ENCODE measurements at regions of chr5 and their contacts with region 1.

Region 1: GRCh38 chr5:32852535-32852934 is 141.4 kb downstream of the NPR3 start:
- DNase-seq: peak in 1 of 2 experiments; percentile 91
- H3K4me3 ChIP-seq: no peak overlapping the region
- H3K27ac ChIP-seq: no peak overlapping the region
- H3K4me1 ChIP-seq: peaks cover 6% of the 10 kb centered on the region; the same call in 1 of the 2 replicates
- H3K27me3 ChIP-seq: peaks cover 10% of the 10 kb centered on the region; the same call in 1 of the 2 replicates
- CTCF ChIP-seq: peak; percentile 66

Region 2: GRCh38 chr5:32388432-32389129 is 464.0 kb before region 1 on chr5:
- CTCF ChIA-PET with region 1: no interaction called
- POLR2A ChIA-PET with region 1: no interaction called
- intact Hi-C with region 1: no loop called
- DNase-seq: no peak
- H3K4me3 ChIP-seq: no peak overlapping the region
- H3K27ac ChIP-seq: no peak overlapping the region
- H3K4me1 ChIP-seq: no peaks in the 10 kb centered on the region
- H3K27me3 ChIP-seq: no peaks in the 10 kb centered on the region
- CTCF ChIP-seq: no peak

Region 3: DNA sequence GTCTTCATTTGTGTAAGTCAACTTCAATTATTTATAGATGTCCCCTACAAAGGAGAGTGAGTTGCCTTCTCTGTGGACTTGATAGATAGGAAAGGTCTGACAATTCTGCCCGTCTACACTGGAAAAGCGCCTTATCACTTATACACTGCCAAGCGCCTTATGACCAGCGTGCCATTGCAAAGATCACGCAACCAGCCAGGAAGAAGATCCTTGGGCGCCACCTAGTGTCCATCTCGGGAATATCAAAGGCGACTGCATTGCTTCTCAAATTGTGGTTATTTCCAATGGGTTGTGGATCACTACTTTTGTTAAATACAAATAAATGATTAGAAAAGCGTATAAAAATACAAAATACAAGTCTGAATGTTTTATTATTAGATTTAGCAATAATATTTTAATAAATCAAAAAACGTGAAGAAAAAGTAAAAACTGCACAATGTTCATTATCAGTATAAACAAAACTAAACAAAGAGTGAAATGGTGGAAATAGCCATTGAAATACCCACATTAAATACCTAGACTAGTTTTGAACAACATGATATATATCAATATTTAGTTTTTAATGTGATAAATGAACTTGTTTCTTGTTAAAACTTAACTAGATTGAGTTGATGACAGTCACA is 239.4 kb before region 1 on chr5:
- CTCF ChIA-PET with region 1: interaction called, 3 read pairs
- POLR2A ChIA-PET with region 1: no interaction called
- intact Hi-C with region 1: loop called (anchors 5 kb)
- DNase-seq: peak; percentile 62 to 86
- H3K4me3 ChIP-seq: no peak overlapping the region
- H3K27ac ChIP-seq: no peak overlapping the region
- H3K4me1 ChIP-seq: no peaks in the 10 kb centered on the region
- H3K27me3 ChIP-seq: no peaks in the 10 kb centered on the region
- CTCF ChIP-seq: peak; percentile 100

Region 4: DNA sequence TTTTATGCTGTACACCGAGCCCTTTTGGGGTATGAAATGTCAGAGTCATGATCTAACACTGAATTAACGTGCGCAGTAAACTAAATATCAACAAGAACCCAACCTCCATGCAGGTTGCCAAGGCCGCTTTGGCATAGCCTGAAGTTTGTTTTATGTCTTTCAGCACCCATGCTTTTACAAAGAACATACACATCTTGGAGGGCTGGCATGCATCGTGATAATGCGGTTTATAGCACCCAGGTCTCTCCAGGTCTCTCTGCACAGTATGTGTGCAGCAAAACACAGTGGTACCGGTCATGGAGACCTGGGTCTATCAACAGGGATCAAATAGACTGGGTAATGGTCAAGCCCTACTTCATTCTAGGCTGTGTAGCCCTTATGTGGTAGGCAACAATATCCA is 129.6 kb before region 1 on chr5:
- CTCF ChIA-PET with region 1: no interaction called
- POLR2A ChIA-PET with region 1: interaction called, 10 read pairs
- intact Hi-C with region 1: no loop called
- DNase-seq: no peak
- H3K4me3 ChIP-seq: no peak overlapping the region
- H3K27ac ChIP-seq: no peak overlapping the region
- H3K4me1 ChIP-seq: no peaks in the 10 kb centered on the region
- H3K27me3 ChIP-seq: peaks cover 36% of the 10 kb centered on the region
- CTCF ChIP-seq: no peak

Region 5: GRCh38 chr5:32767948-32768427 is 84.5 kb before region 1 on chr5:
- CTCF ChIA-PET with region 1: no interaction called
- POLR2A ChIA-PET with region 1: no interaction called
- intact Hi-C with region 1: loop called (anchors 1 kb)
- DNase-seq: peak; percentile 89 to 97
- H3K4me3 ChIP-seq: peak overlapping the region; percentile 6; the same call in 1 of the 2 replicates
- H3K27ac ChIP-seq: peak overlapping the region; percentile 74
- H3K4me1 ChIP-seq: peaks cover 18% of the 10 kb centered on the region
- H3K27me3 ChIP-seq: no peaks in the 10 kb centered on the region
- CTCF ChIP-seq: no peak

Region 6: DNA sequence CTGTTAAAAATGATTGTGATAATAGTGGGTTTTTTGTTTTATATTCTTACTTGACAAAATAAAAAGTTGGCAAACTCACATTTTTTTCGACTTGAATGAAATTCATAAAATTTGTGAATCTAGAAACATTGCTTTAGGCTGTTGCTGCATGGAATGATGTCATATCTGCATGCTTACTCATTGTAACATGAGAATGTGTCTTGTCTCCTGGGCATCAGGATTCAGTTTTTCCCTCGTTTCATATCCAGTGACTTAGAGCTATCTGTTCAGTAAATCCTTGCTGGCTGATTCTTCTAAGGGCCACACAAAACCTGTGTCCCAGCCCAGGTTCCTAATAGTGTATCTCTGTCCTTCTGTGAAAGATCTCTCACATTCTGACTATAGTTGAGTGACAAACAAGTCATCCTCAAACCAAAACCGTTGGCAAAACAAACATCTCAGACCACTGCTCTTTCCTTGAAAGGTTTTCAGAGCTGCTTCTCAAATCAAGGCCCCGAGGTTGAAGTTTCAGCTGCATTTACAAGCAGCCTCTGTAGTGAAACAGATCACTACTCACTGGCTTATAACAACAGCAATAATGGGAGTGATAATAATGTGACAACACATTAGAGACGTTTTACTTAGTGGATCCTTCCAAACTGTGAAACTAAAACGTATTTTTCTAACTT is 46.4 kb before region 1 on chr5:
- CTCF ChIA-PET with region 1: no interaction called
- POLR2A ChIA-PET with region 1: no interaction called
- intact Hi-C with region 1: loop called (anchors 1 kb)
- DNase-seq: no peak
- H3K4me3 ChIP-seq: no peak overlapping the region
- H3K27ac ChIP-seq: no peak overlapping the region
- H3K4me1 ChIP-seq: peaks cover 11% of the 10 kb centered on the region
- H3K27me3 ChIP-seq: peaks cover 7% of the 10 kb centered on the region; the same call in 1 of the 2 replicates
- CTCF ChIP-seq: no peak

Region 7: DNA sequence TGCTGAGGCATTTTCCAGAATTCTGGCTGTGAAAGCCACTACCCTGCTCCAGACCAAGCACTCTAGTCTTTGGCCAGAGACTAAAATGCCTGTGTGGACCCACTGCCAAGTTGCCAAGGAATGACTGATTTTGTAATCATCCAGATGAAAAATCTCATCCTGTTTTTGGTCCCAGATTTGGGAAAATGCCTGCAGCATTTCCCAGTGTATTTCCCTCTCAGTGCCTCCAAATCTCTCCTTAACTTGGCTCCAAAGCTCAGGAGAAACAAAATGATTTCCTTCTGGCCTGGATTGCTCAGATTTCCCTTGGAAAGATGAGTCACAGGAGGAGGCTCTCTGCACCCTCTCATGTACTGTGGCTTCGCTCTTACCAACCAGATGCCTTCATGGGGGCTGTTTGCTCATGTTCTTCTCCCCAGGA is 253.0 kb after region 1 on chr5:
- CTCF ChIA-PET with region 1: no interaction called
- POLR2A ChIA-PET with region 1: no interaction called
- intact Hi-C with region 1: no loop called
- DNase-seq: no peak
- H3K4me3 ChIP-seq: no peak overlapping the region
- H3K27ac ChIP-seq: no peak overlapping the region
- H3K4me1 ChIP-seq: no peaks in the 10 kb centered on the region
- H3K27me3 ChIP-seq: no peaks in the 10 kb centered on the region
- CTCF ChIP-seq: no peak

Region 8: GRCh38 chr5:33212900-33213299 is 360.4 kb after region 1 on chr5:
- CTCF ChIA-PET with region 1: no interaction called
- POLR2A ChIA-PET with region 1: no interaction called
- intact Hi-C with region 1: no loop called
- DNase-seq: no peak
- H3K4me3 ChIP-seq: no peak overlapping the region
- H3K27ac ChIP-seq: no peak overlapping the region
- H3K4me1 ChIP-seq: no peaks in the 10 kb centered on the region
- H3K27me3 ChIP-seq: no peaks in the 10 kb centered on the region
- CTCF ChIP-seq: no peak

Region 9: GRCh38 chr5:33299621-33300208 is 447.2 kb after region 1 on chr5:
- CTCF ChIA-PET with region 1: no interaction called
- POLR2A ChIA-PET with region 1: no interaction called
- intact Hi-C with region 1: loop called (anchors 5 kb)
- DNase-seq: peak in 1 of 2 experiments; percentile 37
- H3K4me3 ChIP-seq: no peak overlapping the region
- H3K27ac ChIP-seq: no peak overlapping the region
- H3K4me1 ChIP-seq: no peaks in the 10 kb centered on the region; the same call in 1 of the 2 replicates
- H3K27me3 ChIP-seq: no peaks in the 10 kb centered on the region
- CTCF ChIP-seq: peak; percentile 77

Region 10: DNA sequence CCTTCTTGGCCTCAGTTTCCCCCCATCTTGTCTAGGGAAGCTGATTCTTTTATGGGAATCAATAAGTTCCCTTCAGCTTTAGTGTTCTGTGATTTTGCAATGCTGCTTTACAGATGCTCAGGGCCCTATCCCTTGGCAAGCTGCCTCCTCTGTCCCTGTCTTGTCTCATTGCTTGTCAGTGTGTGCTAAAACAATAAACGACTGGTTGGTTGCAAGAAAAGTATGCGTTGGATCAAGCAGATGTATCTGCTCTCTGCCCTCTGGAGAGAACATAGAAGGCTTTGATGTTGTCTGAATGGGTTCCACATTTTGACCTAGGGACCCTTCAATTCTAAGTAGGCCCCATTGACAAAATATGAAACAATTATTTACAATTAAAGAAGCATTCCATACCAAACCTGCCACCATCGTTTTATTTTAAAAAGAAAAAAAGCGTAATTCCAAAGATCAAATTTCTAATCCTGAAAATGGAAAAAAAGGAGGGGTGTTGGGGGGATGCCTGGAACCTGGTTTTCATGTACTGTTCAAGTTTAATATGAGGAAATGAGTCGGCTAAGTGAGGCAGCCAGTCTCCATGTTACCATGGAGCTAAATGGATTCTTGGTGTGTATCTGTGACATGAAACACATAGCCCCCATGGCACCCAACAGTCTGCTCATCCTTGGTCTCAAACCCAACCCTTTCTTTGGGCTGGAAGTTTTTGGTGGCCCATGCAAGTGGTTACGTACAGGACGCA is 557.1 kb after region 1 on chr5:
- CTCF ChIA-PET with region 1: no interaction called
- POLR2A ChIA-PET with region 1: no interaction called
- intact Hi-C with region 1: no loop called
- DNase-seq: peak in 1 of 2 experiments; percentile 13
- H3K4me3 ChIP-seq: no peak overlapping the region
- H3K27ac ChIP-seq: no peak overlapping the region
- H3K4me1 ChIP-seq: no peaks in the 10 kb centered on the region
- H3K27me3 ChIP-seq: no peaks in the 10 kb centered on the region
- CTCF ChIP-seq: no peak

Measured in PC-9 (cell line).